IMR-90 (cell line): ENCODE measurements at regions of chr6 and their contacts with region 1.

Region 1: DNA sequence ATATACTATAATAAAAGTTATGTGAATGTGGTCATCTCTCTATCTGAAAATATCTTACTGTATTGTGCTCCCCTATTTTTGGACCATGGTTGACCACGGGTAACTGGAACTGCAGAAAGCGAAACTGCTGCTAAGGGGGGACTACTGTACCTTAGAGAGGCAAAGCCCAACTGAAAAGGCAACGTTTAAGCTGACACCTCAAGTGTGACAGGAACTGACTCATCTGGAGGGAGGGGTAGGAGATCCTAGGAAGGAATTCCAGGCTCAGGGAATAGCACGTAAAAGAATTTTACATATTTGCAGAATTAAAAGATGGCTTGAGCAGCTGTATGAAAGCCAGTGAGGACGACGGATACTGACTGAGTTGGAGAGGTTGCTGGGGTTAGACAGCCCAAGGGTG is 34.8 kb downstream of the ELOVL2 start:
- DNase-seq: peak; percentile 61
- ATAC-seq: peak; percentile 42
- H3K4me3 ChIP-seq: no peak overlapping the region
- H3K27ac ChIP-seq: peak overlapping the region; percentile 44; the same call in 1 of the 2 replicates
- H3K4me1 ChIP-seq: peaks cover 24% of the 10 kb centered on the region
- H3K27me3 ChIP-seq: no peaks in the 10 kb centered on the region
- CTCF ChIP-seq: no peak
- POLR2A ChIP-seq: no peak
- RAD21 ChIP-seq: no peak

Region 2: DNA sequence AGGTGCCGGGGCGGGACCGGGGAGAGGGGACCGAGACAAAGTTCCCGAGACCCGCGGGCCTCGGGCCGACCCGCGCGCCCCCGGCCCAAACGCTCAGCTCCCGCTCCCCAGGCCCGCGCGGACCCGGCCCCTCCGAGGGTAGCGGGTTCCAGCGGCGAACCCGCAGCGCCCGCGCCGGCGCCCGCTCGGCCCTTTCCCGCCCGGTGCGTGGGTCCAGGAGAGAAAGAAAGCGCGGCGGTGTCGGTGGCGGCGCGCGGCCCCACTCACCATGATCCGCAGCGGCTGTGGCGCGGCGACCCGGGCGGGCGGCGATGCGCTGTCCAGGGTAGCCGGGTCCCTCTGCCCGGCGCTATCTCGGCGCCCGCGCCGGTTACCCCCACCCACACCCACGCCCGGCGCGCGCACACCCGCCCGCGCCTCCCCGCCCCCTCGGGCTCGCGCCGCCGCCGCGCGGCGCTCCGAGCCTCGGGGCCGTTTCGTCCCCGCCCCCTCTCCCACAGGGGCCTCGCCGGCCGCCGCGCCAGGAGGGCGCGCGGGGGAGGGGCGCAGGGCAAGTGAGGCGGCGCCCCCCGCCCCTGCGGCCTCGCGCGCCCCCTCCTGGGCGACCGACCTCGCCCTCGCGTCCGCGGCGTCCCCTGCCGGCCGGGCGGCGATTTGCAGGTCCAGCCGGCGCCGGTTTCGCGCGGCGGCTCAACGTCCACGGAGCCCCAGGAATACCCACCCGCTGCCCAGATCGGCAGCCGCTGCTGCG is 34.8 kb after region 1 on chr6 and contains the start of gene ELOVL2:
- CTCF ChIA-PET with region 1: no interaction called
- POLR2A ChIA-PET with region 1: no interaction called
- dilution Hi-C with region 1: no loop called
- in situ Hi-C with region 1: no loop called
- intact Hi-C with region 1: loop called (anchors 5 kb)
- DNase-seq: peak; percentile 61
- ATAC-seq: peak; percentile 92
- H3K4me3 ChIP-seq: peak within 1 kb of the TSS; percentile 74
- H3K27ac ChIP-seq: peak within 1 kb of the TSS; percentile 54
- H3K4me1 ChIP-seq: peaks cover 3% of the 10 kb centered on the region
- H3K27me3 ChIP-seq: no peaks in the 10 kb centered on the region
- CTCF ChIP-seq: peak; percentile 99
- POLR2A ChIP-seq: no peak
- RAD21 ChIP-seq: peak; percentile 56
- total RNA-seq, gene ELOVL2: 7.9 and 10.6 TPM in 2 replicates

Region 3: DNA sequence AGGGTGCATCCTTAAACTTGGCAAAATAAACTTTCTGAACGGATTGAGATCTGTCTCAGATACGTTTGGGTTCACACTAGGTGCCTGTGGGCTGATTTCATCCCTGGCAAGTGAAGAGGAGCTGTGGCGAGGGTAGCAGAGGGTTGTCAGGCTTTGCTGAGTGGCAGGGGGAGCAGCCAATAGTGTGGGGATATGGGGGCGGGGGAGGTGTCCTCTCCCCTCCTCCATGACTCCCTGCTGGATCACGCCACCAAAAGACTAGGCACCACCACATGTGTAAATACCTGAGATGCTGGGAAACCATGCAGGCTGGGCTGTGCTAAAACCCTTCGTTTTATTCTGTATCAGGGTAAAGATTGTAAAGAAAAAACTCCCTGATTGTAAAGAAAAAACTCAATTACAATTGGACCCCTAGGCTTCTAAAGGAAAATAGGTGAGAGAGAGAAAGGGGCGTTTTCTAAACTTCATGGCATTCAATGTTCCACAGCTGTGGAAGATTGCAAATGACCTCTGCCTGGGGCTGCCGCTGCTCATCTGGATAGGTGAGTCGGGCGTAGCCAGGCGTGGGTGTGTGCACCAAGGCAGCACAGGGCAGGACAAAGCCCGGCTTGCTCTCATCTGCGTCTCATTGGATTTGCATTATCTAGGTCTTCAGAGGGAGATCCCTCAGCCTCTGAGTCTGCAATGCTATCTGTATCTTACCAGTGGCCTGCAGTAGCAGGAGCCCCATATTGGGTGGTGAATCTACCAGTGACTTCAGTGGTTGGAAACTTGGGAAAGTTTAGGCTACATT is 796.1 kb after region 1 on chr6:
- CTCF ChIA-PET with region 1: no interaction called
- POLR2A ChIA-PET with region 1: no interaction called
- dilution Hi-C with region 1: no loop called
- in situ Hi-C with region 1: no loop called
- intact Hi-C with region 1: no loop called
- DNase-seq: no peak
- ATAC-seq: no peak
- H3K4me3 ChIP-seq: no peak overlapping the region
- H3K27ac ChIP-seq: no peak overlapping the region
- H3K4me1 ChIP-seq: peaks cover 3% of the 10 kb centered on the region; the same call in 1 of the 2 replicates
- H3K27me3 ChIP-seq: no peaks in the 10 kb centered on the region
- CTCF ChIP-seq: no peak
- POLR2A ChIP-seq: no peak
- RAD21 ChIP-seq: no peak